Heart right ventricle (tissue), 16 donors: ENCODE measurements at regions of chr14 and their contacts with region 1.

Region 1: DNA sequence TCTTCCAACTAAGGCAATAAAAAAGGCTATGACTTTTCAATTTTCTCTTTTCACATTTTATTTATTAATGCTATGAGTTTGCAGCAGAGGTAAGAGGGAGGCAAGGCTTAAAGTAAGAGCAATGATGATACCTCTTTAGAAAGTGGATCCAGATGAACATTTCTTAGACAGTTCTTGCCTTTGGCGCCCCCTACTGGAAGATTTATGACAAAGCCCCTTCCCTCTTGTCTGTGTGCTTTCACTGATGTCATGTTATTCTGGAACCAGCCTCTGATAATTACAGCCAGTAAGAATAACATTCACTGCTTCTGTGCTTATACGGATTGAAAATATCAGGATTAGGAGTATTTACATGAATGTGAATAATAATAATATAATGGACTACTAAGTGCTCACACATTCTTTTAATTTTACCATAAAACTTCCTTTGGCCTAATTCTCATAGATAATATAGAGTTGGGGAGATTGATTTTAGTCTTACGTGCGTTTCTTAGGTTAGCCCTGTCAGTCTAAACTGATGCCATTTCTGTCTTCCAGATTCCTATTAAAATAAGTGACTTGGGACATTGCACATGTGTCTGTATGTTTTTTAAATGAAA is 1929.9 kb upstream of the SEL1L start:
- DNase-seq: peak in 1 of 2 donors; percentile 37
- ATAC-seq: no peak
- H3K4me3 ChIP-seq: no peak overlapping the region
- H3K27ac ChIP-seq: no peak overlapping the region
- H3K4me1 ChIP-seq: no peaks in the 10 kb centered on the region
- H3K27me3 ChIP-seq: no peaks in the 10 kb centered on the region
- CTCF ChIP-seq: peak; percentile 31 to 77 (median 61)

Region 2: DNA sequence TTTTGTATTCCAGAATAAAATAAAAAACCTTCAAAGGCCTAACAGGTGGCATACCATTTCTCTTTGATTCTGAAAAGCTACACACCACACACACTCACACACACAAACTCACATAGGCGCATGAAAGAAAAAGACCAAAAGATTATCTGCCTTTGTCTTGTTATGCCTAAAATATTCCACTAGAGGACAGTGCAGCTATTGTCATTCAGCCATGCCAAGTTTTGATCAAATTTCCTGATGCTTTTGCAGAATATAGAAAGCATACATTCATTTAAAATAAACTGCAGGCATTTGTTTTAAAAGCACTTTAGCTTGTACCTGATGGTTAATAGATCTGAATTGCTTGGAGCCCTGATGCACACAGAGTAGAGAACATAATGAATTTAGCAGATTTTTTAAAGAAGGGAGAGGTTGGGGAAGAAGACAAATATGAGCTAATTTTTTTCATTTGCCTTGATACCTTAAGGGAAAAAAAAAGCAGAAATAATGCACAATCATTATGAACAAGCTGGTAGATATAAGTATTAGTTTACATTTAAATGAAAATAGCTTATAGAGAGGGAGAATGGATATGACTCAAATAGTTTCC is 163.0 kb before region 1 on chr14:
- intact Hi-C with region 1: loop called in 1 of 10 experiments (anchors 10 kb)
- DNase-seq: no peak
- ATAC-seq: no peak
- H3K4me3 ChIP-seq: no peak overlapping the region
- H3K27ac ChIP-seq: no peak overlapping the region
- H3K4me1 ChIP-seq: no peaks in the 10 kb centered on the region
- H3K27me3 ChIP-seq: peaks cover 0 to 2% (median 0%) of the 10 kb centered on the region in 7 donors
- CTCF ChIP-seq: peak; percentile 49 to 82 (median 76)

Region 3: GRCh38 chr14:83433618-83434017 is 30.0 kb before region 1 on chr14:
- intact Hi-C with region 1: no loop called
- DNase-seq: no peak
- ATAC-seq: no peak
- H3K4me3 ChIP-seq: no peak overlapping the region
- H3K27ac ChIP-seq: no peak overlapping the region
- H3K4me1 ChIP-seq: no peaks in the 10 kb centered on the region
- H3K27me3 ChIP-seq: no peaks in the 10 kb centered on the region
- CTCF ChIP-seq: no peak